A673 (cell line): ENCODE measurements at regions of chrX and their contacts with region 1.

Region 1: DNA sequence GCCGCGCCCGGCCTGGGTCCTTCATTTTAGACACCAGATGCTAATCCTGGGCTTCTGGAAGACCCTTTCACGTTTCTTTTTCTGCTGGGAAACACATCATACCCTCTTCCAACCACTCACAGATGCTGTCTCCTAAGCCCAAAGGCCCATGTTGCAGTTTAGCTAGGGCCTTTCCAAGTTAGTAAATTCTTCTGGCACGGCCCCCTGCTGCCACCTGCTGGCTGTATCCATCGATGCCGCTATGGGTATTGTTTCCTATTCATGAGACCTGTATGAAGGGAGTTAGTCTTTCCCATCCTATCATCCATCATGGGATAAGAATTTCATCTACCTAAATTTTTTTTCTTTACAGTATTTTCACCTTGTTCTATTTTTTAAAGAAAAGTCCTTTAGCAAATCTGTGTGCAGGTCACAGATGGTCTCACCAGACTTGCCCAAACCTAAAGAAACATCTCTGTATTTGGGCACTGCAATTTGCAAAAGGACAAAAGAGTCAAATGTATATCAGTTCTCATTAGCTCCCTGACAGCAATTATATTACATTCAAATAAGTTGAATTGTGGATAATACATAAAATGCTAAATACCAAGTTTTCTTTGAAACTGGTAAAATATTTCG is 37.8 kb upstream of the SLC9A7 start:
- DNase-seq: peak; percentile 82
- H3K4me3 ChIP-seq: no peak overlapping the region
- H3K27ac ChIP-seq: no peak overlapping the region
- H3K4me1 ChIP-seq: peaks cover 11% of the 10 kb centered on the region
- H3K27me3 ChIP-seq: no peaks in the 10 kb centered on the region
- CTCF ChIP-seq: peak; percentile 89

Region 2: DNA sequence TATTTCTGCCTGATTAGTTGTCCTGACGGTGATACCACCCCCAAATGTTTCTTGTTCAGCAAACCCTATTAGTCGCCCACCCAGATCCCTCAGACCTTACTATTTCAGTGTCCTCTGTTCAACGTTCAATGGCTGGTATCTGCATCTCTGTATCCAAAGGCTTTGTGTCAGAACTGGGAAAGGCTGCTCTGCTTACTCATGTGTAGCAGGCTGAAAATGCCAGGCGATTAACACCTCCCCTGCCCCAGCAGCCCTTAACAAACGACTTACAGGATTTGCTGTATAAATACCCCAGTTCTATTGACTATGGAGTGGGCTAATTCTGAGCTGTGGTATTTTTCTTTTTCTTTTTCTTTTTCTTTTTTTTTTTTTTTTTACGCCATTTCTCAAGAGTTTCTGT is 666.4 kb before region 1 on chrX:
- CTCF ChIA-PET with region 1: no interaction called
- POLR2A ChIA-PET with region 1: no interaction called
- intact Hi-C with region 1: no loop called
- DNase-seq: no peak
- H3K4me3 ChIP-seq: no peak overlapping the region
- H3K27ac ChIP-seq: no peak overlapping the region
- H3K4me1 ChIP-seq: no peaks in the 10 kb centered on the region
- H3K27me3 ChIP-seq: no peaks in the 10 kb centered on the region
- CTCF ChIP-seq: no peak

Region 3: GRCh38 chrX:46381630-46382029 is 415.1 kb before region 1 on chrX:
- CTCF ChIA-PET with region 1: no interaction called
- POLR2A ChIA-PET with region 1: no interaction called
- intact Hi-C with region 1: loop called (anchors 2 kb)
- DNase-seq: peak; percentile 75
- H3K4me3 ChIP-seq: no peak overlapping the region
- H3K27ac ChIP-seq: no peak overlapping the region
- H3K4me1 ChIP-seq: peaks cover 7% of the 10 kb centered on the region
- H3K27me3 ChIP-seq: no peaks in the 10 kb centered on the region
- CTCF ChIP-seq: peak; percentile 83

Region 4: GRCh38 chrX:46554942-46555341 is 241.7 kb before region 1 on chrX:
- CTCF ChIA-PET with region 1: interaction called, 6 read pairs
- POLR2A ChIA-PET with region 1: interaction called, 7 read pairs
- intact Hi-C with region 1: loop called (anchors 5 kb)
- DNase-seq: peak; percentile 54
- H3K4me3 ChIP-seq: no peak overlapping the region
- H3K27ac ChIP-seq: no peak overlapping the region
- H3K4me1 ChIP-seq: no peaks in the 10 kb centered on the region
- H3K27me3 ChIP-seq: no peaks in the 10 kb centered on the region
- CTCF ChIP-seq: peak; percentile 53; the same call in 1 of the 2 replicates

Region 5: DNA sequence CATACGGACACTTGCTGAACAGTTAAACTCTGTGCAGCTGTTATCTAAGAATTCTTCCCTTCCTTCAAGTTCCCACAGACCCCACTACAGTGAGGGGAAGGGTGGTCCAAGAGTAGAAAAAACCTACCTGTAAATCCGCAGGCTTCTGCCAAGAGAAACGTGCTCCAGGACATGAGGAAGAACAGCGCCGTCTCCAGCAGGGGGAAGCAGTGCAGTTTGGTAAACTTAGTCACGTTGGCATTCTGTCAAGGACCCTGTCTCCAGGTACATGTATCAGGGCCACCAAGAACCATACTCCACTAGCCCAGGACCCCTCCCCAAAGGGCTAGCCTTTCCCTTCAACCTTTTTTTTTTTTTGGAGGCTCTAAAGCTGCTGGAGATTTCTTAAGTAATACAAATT is 143.2 kb before region 1 on chrX:
- CTCF ChIA-PET with region 1: interaction called, 4 read pairs
- POLR2A ChIA-PET with region 1: no interaction called
- intact Hi-C with region 1: loop called (anchors 5 kb)
- DNase-seq: peak; percentile 41
- H3K4me3 ChIP-seq: no peak overlapping the region
- H3K27ac ChIP-seq: no peak overlapping the region
- H3K4me1 ChIP-seq: peaks cover 20% of the 10 kb centered on the region
- H3K27me3 ChIP-seq: no peaks in the 10 kb centered on the region
- CTCF ChIP-seq: peak; percentile 50

Region 6: DNA sequence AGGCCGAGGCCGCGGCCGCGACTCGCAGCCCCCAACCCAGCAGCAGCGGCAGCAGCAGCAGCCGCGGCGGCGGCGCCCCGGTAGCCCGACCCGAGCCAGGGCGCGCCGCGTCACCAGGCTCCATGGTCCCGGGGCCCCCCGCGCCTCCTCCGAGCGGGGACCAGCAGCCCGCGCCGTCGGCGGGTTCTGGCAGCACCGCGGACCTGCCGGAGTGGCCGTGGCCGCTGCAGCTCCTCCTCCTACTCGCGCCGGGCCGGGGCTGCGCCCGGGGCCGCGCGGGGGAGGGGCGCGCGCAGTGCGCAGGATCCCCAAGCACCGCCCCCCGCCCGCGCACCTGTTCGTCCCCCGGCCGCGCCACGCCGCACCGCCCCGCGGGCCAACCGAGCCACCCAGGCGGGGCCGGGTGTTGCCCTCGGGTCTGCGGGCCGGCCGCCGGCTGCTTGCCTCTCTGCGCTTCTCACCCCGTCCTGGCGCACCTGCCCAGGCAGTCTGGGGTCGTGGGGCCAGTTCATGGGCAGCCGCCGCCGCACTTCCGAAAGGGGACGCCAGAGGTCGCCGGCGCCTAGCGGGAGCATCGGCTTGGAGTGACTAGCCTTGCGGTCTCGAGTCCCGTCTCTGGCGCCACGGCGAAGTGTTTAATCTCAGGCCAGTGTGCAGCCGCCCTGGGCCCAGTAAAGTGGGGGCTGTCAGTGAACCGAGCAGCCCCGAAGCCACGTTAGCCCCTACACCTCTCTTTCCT is 37.6 kb before region 1 on chrX and contains the start of gene SLC9A7:
- CTCF ChIA-PET with region 1: interaction called, 4 read pairs
- POLR2A ChIA-PET with region 1: no interaction called
- intact Hi-C with region 1: loop called (anchors 1 kb)
- DNase-seq: peak; percentile 77
- H3K4me3 ChIP-seq: peak within 1 kb of the TSS; percentile 57
- H3K27ac ChIP-seq: no peak within 1 kb of the TSS
- H3K4me1 ChIP-seq: no peaks in the 10 kb centered on the region
- H3K27me3 ChIP-seq: no peaks in the 10 kb centered on the region
- CTCF ChIP-seq: peak; percentile 70
- total RNA-seq, gene SLC9A7: 11.3 and 13.1 TPM in 2 replicates

Region 7: DNA sequence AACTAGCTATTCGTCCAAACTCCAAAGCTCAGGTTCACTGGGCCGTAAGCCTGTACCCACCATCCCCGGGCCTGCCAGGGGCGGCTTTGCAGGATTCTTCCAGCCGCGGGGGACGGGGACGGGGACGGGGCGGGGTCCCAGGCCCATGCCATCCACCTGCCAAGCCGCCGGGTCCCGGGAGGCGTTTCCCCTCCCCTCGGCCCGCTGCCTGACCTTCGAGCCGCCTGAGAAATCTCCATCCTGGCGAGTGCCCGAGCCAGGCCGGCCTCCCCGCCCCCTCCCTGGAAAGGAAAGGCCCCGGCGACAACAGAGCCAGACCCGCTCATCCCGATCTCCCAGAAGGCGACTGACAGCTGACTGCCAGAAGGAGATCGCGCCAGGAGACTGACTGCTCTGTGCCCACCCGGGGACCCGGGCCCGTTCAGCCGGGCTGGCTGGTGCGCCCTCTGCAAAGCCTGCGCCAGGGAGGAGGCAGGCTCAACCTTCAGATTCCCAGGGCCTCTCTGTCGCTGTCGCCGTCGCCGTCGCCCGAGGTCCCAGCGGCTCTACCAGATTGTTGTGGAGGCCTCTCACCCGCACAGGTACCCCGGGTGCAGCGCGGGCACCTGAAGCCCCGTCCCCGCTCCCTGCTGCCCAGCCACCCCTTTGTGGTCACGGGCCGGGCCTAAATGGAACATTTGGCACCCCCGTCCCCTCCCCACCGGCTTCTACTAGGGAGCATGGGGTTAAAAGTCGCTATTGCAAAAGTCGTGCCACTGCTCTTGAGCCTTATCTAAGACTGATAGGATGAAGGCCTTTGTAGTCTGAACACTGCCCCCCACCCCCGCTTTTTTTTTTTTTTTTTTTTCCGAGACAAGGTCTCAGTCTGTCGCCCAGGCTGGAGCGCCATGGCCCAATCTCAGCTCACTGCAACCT is 281.7 kb after region 1 on chrX and contains the start of gene RGN:
- CTCF ChIA-PET with region 1: no interaction called
- POLR2A ChIA-PET with region 1: no interaction called
- intact Hi-C with region 1: no loop called
- DNase-seq: no peak
- H3K4me3 ChIP-seq: no peak within 1 kb of the TSS
- H3K27ac ChIP-seq: no peak within 1 kb of the TSS
- H3K4me1 ChIP-seq: no peaks in the 10 kb centered on the region
- H3K27me3 ChIP-seq: no peaks in the 10 kb centered on the region
- CTCF ChIP-seq: no peak
- total RNA-seq, gene RGN: 1.6 and 1.8 TPM in 2 replicates